Dendritic cell treated with granulocyte-macrophage colony-stimulating factor and Interleukin-4, amounts not matched to agents 40 ng/mL and 50 ng/mL, for 4 days (primary cell): ENCODE measurements at regions of chr13 and their contacts with region 1.

Region 1: GRCh38 chr13:94549232-94550061 is 46.5 kb downstream of the TGDS start:
- H3K4me3 Mint-ChIP-seq: peak overlapping the region; percentile 87
- H3K27ac Mint-ChIP-seq: peak overlapping the region; percentile 55
- H3K4me1 Mint-ChIP-seq: peaks cover 11% of the 10 kb centered on the region
- H3K27me3 Mint-ChIP-seq: peaks cover 15% of the 10 kb centered on the region

Region 2: DNA sequence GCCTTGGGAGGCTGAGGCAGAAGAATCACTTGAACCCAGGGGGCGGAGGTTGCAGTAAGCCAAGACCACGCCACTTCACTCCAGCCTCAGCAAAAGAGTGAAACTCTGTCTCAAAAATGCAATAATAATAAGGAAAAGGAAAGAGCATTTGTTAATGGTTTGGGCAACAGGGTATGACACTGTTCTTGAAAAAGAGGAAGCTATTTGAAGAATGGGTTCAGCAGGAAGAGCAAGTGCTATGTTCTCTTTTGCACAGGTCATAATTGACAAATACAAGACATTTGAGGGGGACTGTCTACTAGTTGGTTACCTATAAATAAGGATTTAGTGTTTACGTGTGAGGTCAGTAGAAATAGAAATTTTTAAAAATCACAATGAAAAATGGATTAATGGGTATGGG is 288.3 kb before region 1 on chr13:
- intact Hi-C with region 1: no loop called
- H3K4me3 Mint-ChIP-seq: no peak overlapping the region
- H3K27ac Mint-ChIP-seq: no peak overlapping the region
- H3K4me1 Mint-ChIP-seq: peaks cover 4% of the 10 kb centered on the region
- H3K27me3 Mint-ChIP-seq: no peaks in the 10 kb centered on the region

Region 3: DNA sequence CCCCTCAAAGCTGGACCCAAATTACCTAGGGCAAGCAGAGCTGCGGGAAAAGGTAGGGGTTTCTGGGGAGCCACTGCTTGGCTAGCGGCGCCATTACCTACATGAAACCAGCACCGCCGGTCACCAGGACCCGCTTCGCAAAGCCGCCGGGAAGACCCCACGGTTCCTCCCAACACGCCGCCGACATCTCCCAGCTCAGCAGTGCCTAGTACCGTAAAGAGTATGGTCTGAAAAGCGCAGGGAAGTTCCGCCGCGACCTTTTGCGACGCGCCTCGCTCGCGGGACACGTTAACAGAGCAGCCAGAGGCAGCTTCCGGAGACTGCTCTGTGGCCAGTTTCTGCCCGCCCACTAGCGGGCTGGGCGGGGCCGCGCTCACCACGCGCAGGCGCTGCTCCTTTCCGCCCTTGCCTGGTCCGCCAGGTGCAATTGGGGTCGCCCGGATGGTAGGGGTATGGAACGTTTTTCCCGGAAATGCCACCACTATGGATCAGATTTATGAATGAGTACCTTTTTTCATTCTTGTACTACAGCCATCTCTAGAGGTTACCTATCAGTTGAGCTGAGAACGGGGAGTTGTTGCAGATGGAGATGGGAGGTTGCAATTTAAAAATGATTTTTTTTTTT is 46.6 kb after region 1 on chr13 and contains the start of gene TGDS:
- intact Hi-C with region 1: loop called (anchors 1 kb)
- H3K4me3 Mint-ChIP-seq: peak within 1 kb of the TSS; percentile 84
- H3K27ac Mint-ChIP-seq: peak within 1 kb of the TSS; percentile 86
- H3K4me1 Mint-ChIP-seq: peaks cover 26% of the 10 kb centered on the region
- H3K27me3 Mint-ChIP-seq: peaks cover 5% of the 10 kb centered on the region

Region 4: GRCh38 chr13:94620286-94620896 is 70.9 kb after region 1 on chr13:
- intact Hi-C with region 1: no loop called
- H3K4me3 Mint-ChIP-seq: no peak overlapping the region
- H3K27ac Mint-ChIP-seq: no peak overlapping the region
- H3K4me1 Mint-ChIP-seq: no peaks in the 10 kb centered on the region
- H3K27me3 Mint-ChIP-seq: no peaks in the 10 kb centered on the region

Region 5: DNA sequence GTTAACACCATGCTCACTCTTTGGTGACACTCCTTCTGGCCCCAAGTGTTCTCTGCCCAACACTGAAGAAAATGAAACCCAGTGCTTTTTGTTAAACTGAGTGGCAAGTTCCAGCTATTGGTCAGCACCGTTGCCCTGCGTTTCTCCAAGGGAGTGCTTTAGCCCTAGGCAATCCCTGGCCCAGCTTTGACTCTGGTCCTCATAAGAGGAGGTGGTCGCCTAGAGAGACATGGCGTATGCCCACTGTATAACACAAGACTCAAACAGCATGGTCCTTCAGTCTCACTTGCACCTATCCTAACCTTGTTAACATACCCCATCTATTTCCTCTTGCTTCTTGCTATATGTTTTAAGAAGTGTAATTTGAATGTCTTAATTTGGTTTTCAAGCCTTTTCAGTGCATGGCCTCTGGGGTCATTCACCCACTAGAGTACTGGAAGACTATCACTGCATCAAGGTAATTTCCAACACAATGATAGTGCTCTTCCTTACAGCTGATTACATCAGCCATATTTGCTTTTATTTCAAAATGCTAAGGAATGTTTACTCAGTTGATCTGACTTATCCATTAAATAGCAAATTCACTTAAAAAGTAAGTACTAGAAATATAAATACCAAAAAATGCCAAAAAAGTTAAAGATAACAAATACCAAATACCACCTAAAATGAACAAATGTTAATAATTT is 353.4 kb after region 1 on chr13:
- intact Hi-C with region 1: no loop called
- H3K4me3 Mint-ChIP-seq: no peak overlapping the region
- H3K27ac Mint-ChIP-seq: no peak overlapping the region
- H3K4me1 Mint-ChIP-seq: no peaks in the 10 kb centered on the region
- H3K27me3 Mint-ChIP-seq: peaks cover 4% of the 10 kb centered on the region